ENCODE measurements at regions of chr7 and their contacts with region 1.

Region 1: GRCh38 chr7:105652359-105652993 is 71.2 kb upstream of the EFCAB10 start:
- DNase-seq: peak; percentile 43
- H3K4me3 ChIP-seq: no peak overlapping the region
- H3K27ac ChIP-seq: no peak overlapping the region
- H3K4me1 ChIP-seq: peaks cover 7% of the 10 kb centered on the region
- H3K27me3 ChIP-seq: no peaks in the 10 kb centered on the region
- CTCF ChIP-seq: peak; percentile 82 to 90

Region 2: DNA sequence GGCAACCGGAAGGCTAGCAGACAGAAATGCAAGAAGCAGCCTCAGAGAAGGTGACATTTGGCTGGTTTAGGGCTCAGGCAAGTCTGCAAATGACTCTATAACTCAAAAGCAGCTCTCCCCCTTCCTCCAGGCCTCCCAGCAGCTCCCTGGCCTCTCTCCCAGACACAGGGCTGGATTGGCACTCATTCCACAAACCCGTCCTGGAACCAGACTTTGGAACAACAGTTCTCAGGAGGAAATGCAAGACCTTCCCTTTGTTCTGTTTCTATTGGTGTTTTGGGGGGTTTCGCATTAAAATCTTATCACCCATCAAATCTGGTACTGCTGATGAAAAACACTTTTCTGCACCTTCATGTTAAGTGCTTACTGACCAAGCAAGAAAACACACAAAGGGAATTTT is 30.9 kb before region 1 on chr7:
- CTCF ChIA-PET with region 1: no interaction called
- dilution Hi-C with region 1: no loop called
- in situ Hi-C with region 1: no loop called
- intact Hi-C with region 1: no loop called
- DNase-seq: no peak
- H3K4me3 ChIP-seq: no peak overlapping the region
- H3K27ac ChIP-seq: no peak overlapping the region
- H3K4me1 ChIP-seq: no peaks in the 10 kb centered on the region
- H3K27me3 ChIP-seq: no peaks in the 10 kb centered on the region
- CTCF ChIP-seq: no peak

Region 3: GRCh38 chr7:105723572-105723971 is 71.1 kb after region 1 on chr7:
- CTCF ChIA-PET with region 1: no interaction called
- dilution Hi-C with region 1: no loop called
- in situ Hi-C with region 1: no loop called
- intact Hi-C with region 1: no loop called
- DNase-seq: no peak
- H3K4me3 ChIP-seq: no peak overlapping the region
- H3K27ac ChIP-seq: no peak overlapping the region
- H3K4me1 ChIP-seq: no peaks in the 10 kb centered on the region
- H3K27me3 ChIP-seq: no peaks in the 10 kb centered on the region
- CTCF ChIP-seq: no peak

Region 4: GRCh38 chr7:105759670-105760550 is 107.4 kb after region 1 on chr7:
- CTCF ChIA-PET with region 1: no interaction called
- dilution Hi-C with region 1: no loop called
- in situ Hi-C with region 1: no loop called
- intact Hi-C with region 1: loop called (anchors 1 kb)
- DNase-seq: peak; percentile 37
- H3K4me3 ChIP-seq: no peak overlapping the region
- H3K27ac ChIP-seq: no peak overlapping the region
- H3K4me1 ChIP-seq: no peaks in the 10 kb centered on the region
- H3K27me3 ChIP-seq: no peaks in the 10 kb centered on the region
- CTCF ChIP-seq: peak; percentile 60 to 68

Region 5: DNA sequence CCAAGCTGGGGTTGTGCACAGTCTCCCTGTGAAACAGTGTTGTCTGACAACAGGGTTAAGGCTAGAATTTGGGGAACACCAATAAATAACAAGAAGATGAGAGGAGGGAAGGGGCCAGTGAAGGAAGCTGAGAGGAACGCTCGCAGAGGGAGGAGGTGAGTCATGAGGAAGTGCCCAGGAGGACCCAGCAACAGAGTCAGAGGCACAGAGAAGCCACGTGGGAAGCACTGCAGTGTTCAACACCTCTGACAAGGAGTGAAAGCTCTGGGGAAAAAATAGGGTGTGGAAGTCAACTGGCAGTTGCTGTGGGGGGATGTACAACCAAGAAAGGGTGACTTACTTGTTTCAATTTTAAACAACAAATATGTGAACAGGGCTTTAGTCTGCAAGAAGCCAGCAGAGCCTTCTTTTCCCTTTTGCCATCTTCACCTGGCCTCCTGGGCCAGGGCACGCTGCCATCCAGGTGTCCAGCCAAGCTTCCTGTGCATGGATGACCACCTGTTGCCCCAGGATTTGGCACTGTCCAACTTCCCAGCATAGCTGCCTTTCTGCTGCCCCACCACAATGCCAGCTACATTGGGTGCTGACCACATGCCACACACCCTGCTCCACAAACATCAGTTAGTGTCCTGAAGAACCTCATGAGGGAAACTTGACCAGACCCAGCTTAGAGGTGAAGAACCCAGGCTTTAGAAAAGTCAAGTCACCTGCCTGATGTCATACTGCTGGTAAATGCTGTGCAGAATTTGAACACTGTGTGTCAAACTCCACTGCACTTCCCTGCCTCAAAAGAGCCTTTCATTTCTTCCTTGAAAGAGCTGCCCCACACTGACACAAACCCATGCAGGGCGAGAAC is 154.3 kb after region 1 on chr7:
- CTCF ChIA-PET with region 1: no interaction called
- dilution Hi-C with region 1: no loop called
- in situ Hi-C with region 1: no loop called
- intact Hi-C with region 1: no loop called
- DNase-seq: peak; percentile 72
- H3K4me3 ChIP-seq: no peak overlapping the region
- H3K27ac ChIP-seq: no peak overlapping the region
- H3K4me1 ChIP-seq: peaks cover 40% of the 10 kb centered on the region
- H3K27me3 ChIP-seq: no peaks in the 10 kb centered on the region
- CTCF ChIP-seq: no peak

Region 6: DNA sequence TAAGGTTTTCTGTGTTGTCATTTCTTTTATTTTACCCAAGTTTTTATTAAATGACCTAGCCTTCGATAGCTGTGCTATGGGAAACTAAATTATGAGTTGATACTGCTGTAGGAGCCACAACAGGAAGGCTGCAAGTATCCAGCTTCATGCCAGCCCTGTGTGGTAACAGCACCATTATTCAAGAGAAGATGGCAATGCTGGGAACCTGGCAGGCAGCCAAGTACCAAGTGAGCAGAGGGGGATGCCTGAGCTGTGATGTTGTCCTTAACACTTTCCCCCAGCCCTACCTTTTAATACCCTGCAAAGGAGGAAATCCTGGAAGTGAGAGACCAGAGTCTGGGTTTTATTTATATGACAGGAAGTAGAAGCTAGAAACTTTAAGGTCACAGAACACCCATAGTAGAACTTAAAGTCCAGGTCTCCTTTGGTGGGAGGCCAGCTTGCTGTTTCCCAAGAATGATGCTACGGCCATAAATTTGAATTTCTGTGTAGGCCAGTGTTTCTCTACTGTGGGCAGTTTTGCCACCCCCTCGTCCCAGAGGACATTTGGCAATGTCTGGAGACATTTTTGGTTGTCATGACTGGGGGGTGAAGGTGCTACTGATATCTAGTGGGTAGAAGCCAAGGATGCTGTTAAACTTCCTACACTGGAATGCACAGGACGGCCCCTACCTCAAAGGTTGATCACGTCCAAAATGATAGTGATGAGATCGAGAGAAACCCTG is 233.1 kb after region 1 on chr7:
- CTCF ChIA-PET with region 1: no interaction called
- dilution Hi-C with region 1: no loop called
- in situ Hi-C with region 1: no loop called
- intact Hi-C with region 1: loop called (anchors 5 kb)
- DNase-seq: no peak
- H3K4me3 ChIP-seq: no peak overlapping the region
- H3K27ac ChIP-seq: no peak overlapping the region
- H3K4me1 ChIP-seq: peaks cover 5% of the 10 kb centered on the region
- H3K27me3 ChIP-seq: no peaks in the 10 kb centered on the region
- CTCF ChIP-seq: no peak

Region 7: GRCh38 chr7:106153891-106154449 is 501.5 kb after region 1 on chr7:
- CTCF ChIA-PET with region 1: no interaction called
- dilution Hi-C with region 1: loop called (anchors 25 kb)
- in situ Hi-C with region 1: no loop called
- intact Hi-C with region 1: no loop called
- DNase-seq: peak; percentile 62
- H3K4me3 ChIP-seq: no peak overlapping the region
- H3K27ac ChIP-seq: no peak overlapping the region
- H3K4me1 ChIP-seq: peaks cover 9% of the 10 kb centered on the region
- H3K27me3 ChIP-seq: no peaks in the 10 kb centered on the region
- CTCF ChIP-seq: peak; percentile 93 to 99